GM13976 (cell line): ENCODE measurements at regions of chr7 and their contacts with region 1.

Region 1: DNA sequence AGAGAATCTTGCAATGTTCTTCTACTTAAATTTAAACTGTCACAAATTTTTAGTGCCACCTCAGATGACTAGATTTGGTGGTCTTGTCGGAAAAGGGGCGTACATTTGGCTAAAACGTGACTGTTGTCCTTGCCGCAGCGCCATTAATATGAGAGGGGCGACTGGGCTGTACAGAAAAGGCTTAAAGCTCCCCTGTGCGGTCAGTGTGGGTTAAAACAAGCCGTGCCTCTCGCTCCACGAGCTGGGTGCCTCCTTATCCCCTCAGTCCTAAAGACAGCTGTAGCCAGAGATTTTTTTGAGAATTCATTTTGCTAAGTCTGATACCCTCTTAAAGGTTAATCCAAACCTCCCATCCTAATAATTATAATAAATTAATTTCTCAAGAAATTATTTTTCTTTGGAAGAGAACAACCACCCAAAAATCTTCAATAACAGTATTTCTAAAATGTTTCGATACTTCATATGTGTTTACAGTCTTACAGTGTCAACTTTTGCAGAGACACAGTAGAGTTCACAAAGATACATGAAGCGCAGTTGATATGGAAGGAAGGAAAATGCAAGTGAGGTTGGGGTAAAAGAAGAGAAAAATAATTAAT is 68.6 kb downstream of the C7orf25 start:
- DNase-seq: no peak
- CTCF ChIP-seq: peak; percentile 37

Region 2: DNA sequence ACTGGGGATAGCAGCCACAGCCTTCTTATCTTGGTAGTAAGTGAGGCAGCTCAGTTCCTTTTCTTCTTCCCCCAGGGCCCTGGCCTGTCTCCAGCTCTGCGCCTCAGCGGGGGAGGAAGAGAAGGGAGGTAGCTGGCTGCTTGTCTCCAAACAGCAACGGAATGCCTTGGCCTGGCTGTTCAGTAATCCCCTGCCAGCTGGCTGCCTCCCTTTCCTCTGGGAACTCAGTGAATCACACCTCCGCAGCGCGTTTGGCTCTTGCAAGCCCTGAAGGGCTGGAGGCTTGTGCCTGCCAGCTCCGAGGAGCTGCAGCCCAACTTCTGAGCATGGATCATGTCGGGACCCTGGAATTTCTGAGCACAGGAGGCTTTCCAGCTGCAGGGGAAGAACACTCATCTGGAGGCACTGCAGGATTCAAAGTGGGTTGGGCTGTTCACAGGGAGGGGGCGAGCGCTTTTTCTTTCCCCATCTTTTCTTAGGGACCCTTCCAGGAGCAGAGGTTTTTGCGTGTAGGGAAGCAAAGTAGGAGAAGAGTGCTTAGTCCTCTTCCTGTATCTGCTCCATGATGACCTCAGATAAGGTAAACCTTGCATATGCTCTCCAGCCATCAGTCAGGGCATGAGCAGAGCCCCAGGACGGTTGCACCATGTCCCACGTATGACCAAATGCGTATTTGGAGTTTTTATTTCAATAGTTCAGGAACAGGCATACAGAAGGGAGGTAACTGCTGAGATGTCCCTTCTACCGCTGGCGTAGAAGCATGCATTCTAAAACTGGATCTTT is 887.2 kb before region 1 on chr7:
- in situ Hi-C with region 1: loop called (anchors 25 kb)
- DNase-seq: no peak
- CTCF ChIP-seq: no peak

Region 3: DNA sequence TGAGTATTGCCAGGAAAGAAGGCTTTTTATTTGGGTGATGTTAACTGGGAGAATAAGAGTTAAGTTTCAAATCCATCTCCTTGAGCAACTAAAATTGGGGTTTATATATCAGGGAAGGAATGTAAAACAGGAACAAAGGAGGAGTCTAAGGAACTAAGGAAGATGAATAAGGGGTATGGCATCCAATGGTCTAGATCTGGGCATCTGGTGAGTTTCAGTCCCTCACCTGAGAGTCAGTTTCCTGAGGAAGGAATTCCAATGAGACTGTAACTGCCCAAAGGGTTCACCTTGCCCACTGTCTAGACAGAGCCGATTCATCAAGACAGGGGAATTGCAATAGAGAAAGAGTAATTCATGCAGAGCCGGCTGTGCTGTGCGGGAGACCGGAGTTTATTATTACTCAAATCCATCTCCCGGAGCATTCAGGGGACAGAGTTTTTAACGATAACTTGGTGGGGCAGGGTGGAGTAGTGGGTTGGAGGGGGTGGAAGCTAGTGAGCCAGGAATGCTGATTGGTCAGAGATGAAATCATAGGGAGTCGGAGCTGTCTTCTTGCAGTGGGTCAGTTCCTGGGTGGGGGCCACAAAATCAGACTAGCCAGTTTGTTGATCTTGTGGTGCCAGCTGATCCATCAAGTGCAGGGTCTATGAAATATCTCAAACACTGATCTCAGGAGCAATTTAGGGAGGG is 551.3 kb after region 1 on chr7:
- in situ Hi-C with region 1: no loop called
- DNase-seq: no peak
- CTCF ChIP-seq: no peak